Posterior vena cava (tissue), 2 donors: ENCODE measurements at regions of chr5 and their contacts with region 1.

Region 1: GRCh38 chr5:170491479-170491878 is 12.3 kb upstream of the KCNIP1 start:
- DNase-seq: no peak

Region 2: DNA sequence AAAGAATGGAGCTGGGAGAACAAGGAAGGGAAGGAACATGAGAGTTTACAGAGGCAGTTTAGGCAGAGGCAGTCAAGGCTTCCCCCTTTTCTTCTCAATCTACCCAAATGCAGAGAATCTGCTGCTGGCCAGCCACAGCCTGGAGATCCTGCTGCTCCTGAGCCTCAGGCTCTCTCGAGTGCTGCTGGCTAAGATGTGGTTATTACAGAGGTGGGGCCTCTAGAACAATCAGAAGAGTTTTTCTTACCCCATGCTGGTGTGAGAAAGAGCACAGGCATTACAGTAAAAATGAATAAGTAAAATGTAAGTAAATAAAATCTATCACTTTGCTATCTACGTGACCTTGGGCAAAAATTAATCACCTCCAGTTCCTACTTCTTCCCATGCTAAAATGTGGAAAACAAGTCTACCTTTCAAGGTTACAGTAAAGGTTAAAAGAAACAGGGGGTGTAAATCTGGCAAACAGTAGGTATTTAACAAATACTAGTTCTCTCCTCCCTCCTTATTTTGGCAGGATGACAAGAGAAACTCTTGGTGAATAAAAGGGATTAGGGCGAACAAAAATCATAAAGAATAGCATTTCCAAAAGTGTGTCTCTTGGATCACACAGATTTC is 1483.9 kb after region 1 on chr5:
- intact Hi-C with region 1: loop called in 1 of 2 experiments (anchors 5 kb)
- DNase-seq: no peak